ENCODE measurements at regions of chr14 and their contacts with region 1.

Region 1: DNA sequence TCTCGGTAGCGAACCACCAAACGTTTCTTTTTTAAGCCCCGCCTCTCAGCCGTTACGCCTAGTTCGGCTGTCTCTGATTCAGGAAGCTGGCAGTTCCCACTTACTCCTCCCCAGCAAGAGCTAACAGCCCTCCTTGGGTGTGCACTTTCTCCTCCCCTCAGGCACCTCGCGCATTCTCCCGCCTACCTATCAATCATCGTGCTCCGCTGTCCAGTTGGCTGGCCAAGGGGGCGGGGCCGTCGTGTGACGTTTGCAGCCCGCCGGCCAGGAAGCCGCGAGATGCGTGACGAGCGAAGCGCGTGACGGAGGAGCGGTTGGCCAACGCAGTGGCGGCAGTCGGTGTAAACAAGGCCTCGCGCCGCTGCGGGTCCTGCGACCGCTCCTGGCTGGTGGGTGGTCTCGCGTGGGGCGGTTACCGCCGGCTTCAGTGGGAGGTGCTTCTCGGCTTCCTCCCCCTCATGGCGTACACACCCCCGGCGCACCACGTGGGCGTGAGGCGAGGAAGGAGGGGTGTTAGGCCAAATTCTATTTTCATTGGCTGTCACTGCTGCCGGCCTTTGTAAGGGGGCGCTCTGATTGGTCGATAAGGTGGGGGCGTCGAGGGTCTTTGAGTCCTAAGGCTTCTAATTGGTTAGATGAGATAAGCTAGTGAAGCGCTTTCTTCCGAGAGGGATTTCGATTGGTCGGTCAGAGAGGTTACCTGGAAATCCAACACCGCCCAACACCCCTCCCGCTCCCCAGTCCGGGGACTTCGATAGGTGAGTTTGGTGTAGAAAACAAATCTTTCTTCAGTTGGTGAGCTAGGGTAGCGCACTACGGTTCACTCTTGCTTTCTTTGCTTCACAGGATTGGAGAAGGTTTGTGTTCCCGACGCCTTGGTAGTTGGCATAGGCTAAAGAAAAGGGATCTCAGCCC is at the starts of genes DCAF11 and NRL:
- DNase-seq: peak; percentile 98
- ATAC-seq: peak; percentile 94 to 97
- total RNA-seq, gene DCAF11: 59.6 to 60.2 TPM
- total RNA-seq, gene NRL: 1.6 to 1.8 TPM

Region 2: DNA sequence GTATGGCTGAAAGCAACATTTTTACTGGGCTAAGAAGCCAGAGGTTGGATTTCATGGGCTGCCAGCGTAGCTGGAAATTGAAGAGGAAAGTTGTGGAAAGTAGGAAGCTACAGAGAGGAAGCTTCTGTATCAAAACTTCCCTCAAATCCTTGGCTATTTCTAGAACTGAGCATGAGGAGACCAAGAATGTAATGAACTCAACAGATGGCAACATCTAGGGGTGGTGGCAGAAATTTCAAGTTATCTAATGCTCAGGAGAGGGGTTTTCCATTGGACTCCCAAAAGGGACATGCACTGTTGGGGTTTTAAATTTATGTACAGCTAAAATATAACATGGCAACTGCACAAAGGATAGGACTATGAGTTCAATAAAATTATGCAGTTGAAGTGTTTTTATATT is 327.4 kb before region 1 on chr14:
- intact Hi-C with region 1: no loop called
- DNase-seq: no peak
- ATAC-seq: no peak

Region 3: DNA sequence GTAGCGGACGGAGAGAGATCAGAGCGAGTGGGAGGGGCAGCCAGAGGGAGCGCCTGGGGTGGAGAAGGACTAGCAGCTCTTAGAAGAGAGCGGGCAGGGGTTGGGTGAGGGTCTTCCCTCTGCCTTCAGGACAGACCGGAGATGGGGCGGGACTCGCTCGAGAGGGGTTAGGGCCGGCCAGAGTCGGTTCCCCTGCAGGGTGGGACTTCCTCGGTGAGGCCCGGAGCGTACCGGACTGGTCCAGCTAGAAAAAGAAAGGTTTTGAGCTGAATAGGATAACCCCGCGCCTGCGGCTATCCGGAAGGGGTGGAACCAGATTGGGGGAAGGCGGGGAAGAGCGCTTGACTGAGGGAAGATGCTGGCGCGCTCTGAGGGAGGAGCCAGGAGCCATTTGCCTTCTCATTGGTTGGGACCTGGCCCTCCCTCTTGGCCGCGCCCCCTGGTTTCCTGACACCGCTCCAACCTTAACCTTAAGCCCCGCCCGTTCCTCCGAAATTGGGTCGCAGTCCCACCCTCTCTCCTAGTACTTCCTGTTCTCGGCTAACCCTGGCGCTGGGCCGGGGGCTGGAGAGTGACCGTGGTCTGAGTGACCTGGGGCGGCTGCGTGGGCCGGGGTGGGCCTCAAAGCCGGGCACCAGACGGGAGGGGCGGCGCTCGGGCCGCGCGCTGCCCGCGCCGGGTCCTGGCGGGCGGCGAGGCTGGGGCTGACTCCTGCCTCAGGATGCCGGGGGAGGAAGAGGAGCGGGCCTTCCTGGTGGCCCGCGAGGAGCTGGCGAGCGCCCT is 32.4 kb after region 1 on chr14 and contains the start of gene RNF31:
- intact Hi-C with region 1: loop called in 1 of 2 experiments (anchors 5 kb)
- DNase-seq: peak; percentile 99
- ATAC-seq: peak; percentile 95 to 96
- total RNA-seq, gene RNF31: 31.6 to 41.7 TPM

Region 4: GRCh38 chr14:24280797-24281460 is 166.1 kb after region 1 on chr14:
- intact Hi-C with region 1: no loop called
- DNase-seq: no peak
- ATAC-seq: peak; percentile 6 to 57

Region 5: GRCh38 chr14:24299255-24300195 is 184.7 kb after region 1 on chr14 and contains the starts of genes DHRS1 and NOP9:
- intact Hi-C with region 1: no loop called
- DNase-seq: peak; percentile 92
- ATAC-seq: peak; percentile 91 to 95
- total RNA-seq, gene DHRS1: 7.9 to 8.4 TPM
- total RNA-seq, gene NOP9: 17.5 to 21.7 TPM

Measured in left cardiac atrium (tissue), 4 donors.